ENCODE measurements at regions of chr12 and their contacts with region 1.

Region 1: GRCh38 chr12:45745861-45746277 is 16.4 kb downstream of the ARID2 start:
- DNase-seq: peak in 3 of 14 experiments; percentile 34 to 49 (median 47)
- ATAC-seq: peak; percentile 86
- H3K4me3 ChIP-seq: no peak overlapping the region
- H3K4me3 Mint-ChIP-seq: no peak overlapping the region
- H3K27ac ChIP-seq: no peak overlapping the region
- H3K27ac Mint-ChIP-seq: no peak overlapping the region
- H3K4me1 ChIP-seq: peaks cover 19% of the 10 kb centered on the region
- H3K4me1 Mint-ChIP-seq: peaks cover 80% of the 10 kb centered on the region
- H3K27me3 ChIP-seq: no peaks in the 10 kb centered on the region
- H3K27me3 Mint-ChIP-seq: no peaks in the 10 kb centered on the region
- CTCF ChIP-seq: peak; percentile 61

Region 2: DNA sequence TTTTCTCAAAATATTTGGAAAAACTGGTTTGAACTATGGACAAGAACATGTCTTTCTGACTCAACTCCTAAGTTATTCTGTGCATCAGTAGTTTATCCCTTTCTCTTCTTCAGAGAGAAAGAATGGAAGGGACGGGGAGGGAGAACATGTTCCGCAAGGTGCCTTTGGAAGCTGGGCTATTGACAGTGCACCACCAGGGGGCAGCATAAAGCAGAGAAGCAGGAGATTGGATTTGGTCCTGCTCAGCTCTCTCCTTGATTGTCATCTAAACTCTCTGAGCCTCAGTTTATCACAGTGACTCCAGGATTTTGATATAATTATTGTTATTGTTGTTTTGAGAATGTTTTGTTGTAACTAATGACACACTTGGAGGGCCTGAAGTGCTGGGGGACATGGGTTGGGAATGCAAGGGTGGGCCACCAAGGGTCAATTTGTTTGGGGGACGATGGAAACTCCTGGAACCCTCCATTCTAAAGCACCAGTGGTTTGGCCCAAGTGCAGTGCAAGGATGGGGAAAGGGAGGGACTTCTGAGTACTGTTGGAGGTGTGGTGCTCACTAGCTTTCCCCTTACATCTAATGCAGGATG is 575.3 kb before region 1 on chr12:
- CTCF ChIA-PET with region 1: no interaction called
- POLR2A ChIA-PET with region 1: no interaction called
- intact Hi-C with region 1: loop called in 1 of 2 experiments (anchors 5 kb)
- DNase-seq: peak; percentile 60 to 87 (median 78)
- ATAC-seq: peak; percentile 66
- H3K4me3 ChIP-seq: no peak overlapping the region
- H3K4me3 Mint-ChIP-seq: no peak overlapping the region
- H3K27ac ChIP-seq: no peak overlapping the region
- H3K27ac Mint-ChIP-seq: no peak overlapping the region
- H3K4me1 ChIP-seq: no peaks in the 10 kb centered on the region
- H3K4me1 Mint-ChIP-seq: no peaks in the 10 kb centered on the region
- H3K27me3 ChIP-seq: no peaks in the 10 kb centered on the region
- H3K27me3 Mint-ChIP-seq: no peaks in the 10 kb centered on the region
- CTCF ChIP-seq: peak; percentile 93

Region 3: GRCh38 chr12:45543906-45544315 is 202.0 kb before region 1 on chr12:
- CTCF ChIA-PET with region 1: interaction called, 5 read pairs
- POLR2A ChIA-PET with region 1: interaction called, 8 read pairs
- intact Hi-C with region 1: loop called in 1 of 2 experiments (anchors 5 kb)
- DNase-seq: peak in 12 of 14 experiments; percentile 3 to 83 (median 20)
- ATAC-seq: peak; percentile 87
- H3K4me3 ChIP-seq: no peak overlapping the region
- H3K4me3 Mint-ChIP-seq: no peak overlapping the region
- H3K27ac ChIP-seq: no peak overlapping the region
- H3K27ac Mint-ChIP-seq: no peak overlapping the region
- H3K4me1 ChIP-seq: no peaks in the 10 kb centered on the region
- H3K4me1 Mint-ChIP-seq: no peaks in the 10 kb centered on the region
- H3K27me3 ChIP-seq: no peaks in the 10 kb centered on the region
- H3K27me3 Mint-ChIP-seq: no peaks in the 10 kb centered on the region
- CTCF ChIP-seq: peak; percentile 83

Region 4: GRCh38 chr12:45655201-45655600 is 90.7 kb before region 1 on chr12:
- CTCF ChIA-PET with region 1: interaction called, 6 read pairs
- POLR2A ChIA-PET with region 1: no interaction called
- intact Hi-C with region 1: loop called (anchors 1 to 2 kb)
- DNase-seq: peak; percentile 33 to 87 (median 55)
- ATAC-seq: peak; percentile 100
- H3K4me3 ChIP-seq: no peak overlapping the region
- H3K4me3 Mint-ChIP-seq: no peak overlapping the region
- H3K27ac ChIP-seq: no peak overlapping the region
- H3K27ac Mint-ChIP-seq: no peak overlapping the region
- H3K4me1 ChIP-seq: no peaks in the 10 kb centered on the region
- H3K4me1 Mint-ChIP-seq: peaks cover 8% of the 10 kb centered on the region
- H3K27me3 ChIP-seq: peaks cover 0 to 8% of the 10 kb centered on the region in 2 experiments
- H3K27me3 Mint-ChIP-seq: peaks cover 12% of the 10 kb centered on the region
- CTCF ChIP-seq: no peak

Region 5: DNA sequence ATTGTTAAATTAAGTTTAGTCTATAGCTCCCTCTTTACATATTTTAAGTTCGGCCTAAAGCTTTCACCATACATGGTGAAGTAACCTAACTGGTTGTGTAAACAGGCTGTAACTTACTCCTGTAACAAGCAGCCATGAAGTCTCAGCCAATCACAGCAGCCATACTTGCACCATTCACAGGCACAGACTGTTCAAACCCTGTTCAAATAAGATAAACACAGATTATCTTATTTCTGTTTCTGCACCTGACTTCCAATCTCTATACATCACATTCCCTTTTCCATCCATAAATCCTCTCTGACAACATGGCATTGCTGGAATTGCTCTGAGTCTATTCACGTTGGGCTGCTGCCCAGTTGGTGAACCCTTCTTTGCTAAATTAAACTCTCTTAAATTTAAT is 50.9 kb before region 1 on chr12:
- CTCF ChIA-PET with region 1: no interaction called
- POLR2A ChIA-PET with region 1: no interaction called
- intact Hi-C with region 1: no loop called
- DNase-seq: no peak
- ATAC-seq: no peak
- H3K4me3 ChIP-seq: no peak overlapping the region
- H3K4me3 Mint-ChIP-seq: no peak overlapping the region
- H3K27ac ChIP-seq: no peak overlapping the region
- H3K27ac Mint-ChIP-seq: no peak overlapping the region
- H3K4me1 ChIP-seq: no peaks in the 10 kb centered on the region
- H3K4me1 Mint-ChIP-seq: no peaks in the 10 kb centered on the region
- H3K27me3 ChIP-seq: no peaks in the 10 kb centered on the region
- H3K27me3 Mint-ChIP-seq: no peaks in the 10 kb centered on the region
- CTCF ChIP-seq: no peak

Region 6: GRCh38 chr12:45718306-45718705 is 27.6 kb before region 1 on chr12:
- CTCF ChIA-PET with region 1: no interaction called
- POLR2A ChIA-PET with region 1: no interaction called
- intact Hi-C with region 1: loop called in 1 of 2 experiments (anchors 5 kb)
- DNase-seq: no peak
- ATAC-seq: no peak
- H3K4me3 ChIP-seq: no peak overlapping the region
- H3K4me3 Mint-ChIP-seq: no peak overlapping the region
- H3K27ac ChIP-seq: no peak overlapping the region
- H3K27ac Mint-ChIP-seq: peak overlapping the region; percentile 69
- H3K4me1 ChIP-seq: peaks cover 18% of the 10 kb centered on the region
- H3K4me1 Mint-ChIP-seq: peaks cover 64% of the 10 kb centered on the region
- H3K27me3 ChIP-seq: no peaks in the 10 kb centered on the region
- H3K27me3 Mint-ChIP-seq: no peaks in the 10 kb centered on the region
- CTCF ChIP-seq: no peak